PC-9 (cell line): ENCODE measurements at regions of chr2 and their contacts with region 1.

Region 1: GRCh38 chr2:164937864-164938401 is 17.4 kb downstream of the SLC38A11 start:
- DNase-seq: no peak
- H3K4me3 ChIP-seq: no peak overlapping the region
- H3K27ac ChIP-seq: no peak overlapping the region
- H3K4me1 ChIP-seq: no peaks in the 10 kb centered on the region
- H3K27me3 ChIP-seq: no peaks in the 10 kb centered on the region
- CTCF ChIP-seq: no peak

Region 2: GRCh38 chr2:164896634-164897355 is 41.1 kb before region 1 on chr2:
- CTCF ChIA-PET with region 1: no interaction called
- POLR2A ChIA-PET with region 1: interaction called, 12 read pairs
- intact Hi-C with region 1: no loop called
- DNase-seq: peak in 1 of 2 experiments; percentile 69
- H3K4me3 ChIP-seq: 0 out of 2 replicates have a peak overlapping the region, but pooled peaks have one; percentile 24
- H3K27ac ChIP-seq: peak overlapping the region; percentile 86
- H3K4me1 ChIP-seq: peaks cover 16% of the 10 kb centered on the region
- H3K27me3 ChIP-seq: no peaks in the 10 kb centered on the region
- CTCF ChIP-seq: no peak